Activated naive CD4-positive, alpha-beta T cell treated with anti-CD3 and anti-CD28 coated beads for 36 hours (primary cell): ENCODE measurements at regions of chr6 and their contacts with region 1.

Region 1: DNA sequence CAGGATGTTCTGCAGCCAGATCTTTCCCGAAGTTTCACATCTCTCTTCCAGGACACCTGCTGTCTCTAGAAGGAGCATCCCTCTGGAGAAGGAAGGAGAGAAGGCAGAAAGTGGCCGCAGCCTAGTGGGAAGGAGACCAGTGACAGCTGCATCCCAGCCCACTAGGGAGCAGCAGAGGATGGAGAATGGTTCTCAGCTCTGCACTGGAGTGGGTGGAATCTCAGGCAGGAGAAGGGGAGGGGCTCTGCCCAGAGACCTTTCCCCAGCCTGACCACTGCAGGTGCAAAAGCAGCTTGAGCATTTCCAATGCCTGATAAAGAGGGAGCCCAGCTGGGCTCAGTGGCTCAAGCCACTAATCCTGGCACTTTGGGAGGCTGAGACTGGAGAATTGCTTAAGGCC is 32.3 kb downstream of the NCR2 start:
- DNase-seq: peak; percentile 54
- H3K4me3 Mint-ChIP-seq: no peak overlapping the region
- H3K27ac Mint-ChIP-seq: no peak overlapping the region
- H3K4me1 Mint-ChIP-seq: peaks cover 16% of the 10 kb centered on the region
- H3K27me3 Mint-ChIP-seq: peaks cover 29% of the 10 kb centered on the region

Region 2: DNA sequence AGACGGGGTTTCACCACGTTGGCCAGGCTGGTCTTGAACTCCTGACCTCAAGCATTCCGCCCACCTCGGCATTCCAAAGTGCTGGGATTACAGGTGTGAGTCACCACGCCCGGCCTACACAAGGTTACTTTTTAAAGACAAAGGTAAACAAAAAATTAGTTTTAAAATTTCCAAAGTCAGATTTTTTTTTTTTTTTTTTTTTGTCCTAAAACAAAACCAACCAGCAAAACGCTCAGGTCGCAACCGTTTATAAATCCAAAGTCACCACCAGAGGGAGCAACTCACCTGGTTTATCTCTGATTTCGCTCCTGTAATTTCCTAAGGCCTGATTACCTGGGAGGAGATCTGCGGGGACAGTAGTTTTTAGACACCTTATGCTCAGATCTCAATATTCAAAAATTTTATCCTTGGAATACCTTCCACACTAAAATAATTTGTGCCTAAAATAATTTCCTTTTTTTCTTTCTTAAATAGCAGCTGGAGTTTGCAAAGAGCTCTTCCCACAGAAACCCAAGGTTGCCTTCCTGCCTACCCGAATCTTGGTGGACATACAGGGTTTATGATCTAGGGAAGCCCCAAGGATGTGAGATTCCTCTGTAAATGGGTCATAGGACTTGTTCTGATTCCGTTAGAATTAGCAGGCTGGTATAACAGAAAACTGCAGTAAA is 61.4 kb before region 1 on chr6:
- CTCF ChIA-PET with region 1: interaction called, 11 read pairs
- intact Hi-C with region 1: loop called (anchors 2 kb)
- DNase-seq: peak; percentile 73
- H3K4me3 Mint-ChIP-seq: no peak overlapping the region
- H3K27ac Mint-ChIP-seq: no peak overlapping the region
- H3K4me1 Mint-ChIP-seq: peaks cover 18% of the 10 kb centered on the region
- H3K27me3 Mint-ChIP-seq: no peaks in the 10 kb centered on the region

Region 3: DNA sequence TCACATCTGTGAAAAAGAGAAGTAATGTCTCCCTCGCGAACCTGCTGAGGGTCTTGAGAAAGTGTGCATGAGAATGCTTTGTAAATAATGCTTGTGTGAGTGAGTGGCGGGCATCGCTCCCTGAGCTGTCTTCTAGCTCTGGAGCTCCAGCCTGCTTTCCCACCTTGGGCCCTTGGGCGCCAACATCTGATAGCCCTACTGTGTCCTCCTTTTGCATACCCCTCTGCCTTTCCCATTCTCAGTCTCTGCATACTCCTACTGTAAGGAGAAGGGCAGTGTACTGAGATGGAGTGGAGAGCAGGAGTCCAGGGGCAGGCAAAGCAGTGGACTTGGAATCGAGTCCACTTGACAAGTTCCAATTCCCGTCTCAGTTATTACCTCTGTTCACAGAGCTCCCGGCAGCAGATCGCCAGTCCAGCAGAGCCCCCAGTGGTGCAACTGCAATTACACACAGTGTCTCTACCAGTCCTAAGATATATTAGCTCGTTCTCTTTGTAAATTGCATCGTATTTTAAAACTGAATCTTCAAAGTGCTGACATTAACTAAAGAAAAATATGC is 33.1 kb before region 1 on chr6:
- CTCF ChIA-PET with region 1: interaction called, 24 read pairs
- intact Hi-C with region 1: loop called (anchors 1 kb)
- DNase-seq: peak; percentile 30
- H3K4me3 Mint-ChIP-seq: no peak overlapping the region
- H3K27ac Mint-ChIP-seq: peak overlapping the region; percentile 78
- H3K4me1 Mint-ChIP-seq: peaks cover 46% of the 10 kb centered on the region
- H3K27me3 Mint-ChIP-seq: no peaks in the 10 kb centered on the region

Region 4: DNA sequence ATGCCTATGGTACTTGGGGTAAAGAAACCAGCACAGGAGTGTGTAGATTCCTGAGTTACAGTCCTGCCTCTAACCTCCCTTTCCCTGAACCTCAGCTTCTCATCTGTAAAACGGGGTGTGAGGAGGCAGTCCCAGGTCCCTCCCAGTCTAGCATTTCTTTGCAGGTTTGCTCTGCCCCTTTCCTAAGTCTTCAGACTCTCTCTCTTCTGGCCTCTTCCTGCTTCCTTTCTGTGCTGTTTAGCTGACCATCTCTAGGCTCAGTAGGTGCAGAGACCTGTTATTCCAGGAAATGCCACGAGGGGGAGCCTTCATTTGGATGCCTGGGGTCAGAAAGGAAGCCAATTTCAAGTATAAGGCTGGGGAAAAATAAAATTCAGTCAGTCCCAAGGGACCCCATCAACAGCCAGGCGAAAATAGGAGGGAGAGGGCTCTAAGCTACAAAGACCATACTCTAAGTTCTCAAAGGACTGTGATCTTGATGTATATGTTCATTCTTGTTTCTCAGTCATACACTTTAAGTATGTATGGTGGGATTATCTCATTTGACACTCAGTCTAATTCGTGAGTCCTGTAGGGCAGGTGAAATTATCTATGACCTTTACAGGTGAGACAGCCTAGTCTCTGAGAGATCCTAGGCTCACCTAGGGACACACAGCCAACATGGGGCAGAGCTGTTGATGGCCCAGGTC is 56.8 kb after region 1 on chr6:
- CTCF ChIA-PET with region 1: interaction called, 25 read pairs
- intact Hi-C with region 1: loop called (anchors 1 kb)
- DNase-seq: peak; percentile 92
- H3K4me3 Mint-ChIP-seq: no peak overlapping the region
- H3K27ac Mint-ChIP-seq: no peak overlapping the region
- H3K4me1 Mint-ChIP-seq: peaks cover 8% of the 10 kb centered on the region
- H3K27me3 Mint-ChIP-seq: peaks cover 11% of the 10 kb centered on the region

Region 5: DNA sequence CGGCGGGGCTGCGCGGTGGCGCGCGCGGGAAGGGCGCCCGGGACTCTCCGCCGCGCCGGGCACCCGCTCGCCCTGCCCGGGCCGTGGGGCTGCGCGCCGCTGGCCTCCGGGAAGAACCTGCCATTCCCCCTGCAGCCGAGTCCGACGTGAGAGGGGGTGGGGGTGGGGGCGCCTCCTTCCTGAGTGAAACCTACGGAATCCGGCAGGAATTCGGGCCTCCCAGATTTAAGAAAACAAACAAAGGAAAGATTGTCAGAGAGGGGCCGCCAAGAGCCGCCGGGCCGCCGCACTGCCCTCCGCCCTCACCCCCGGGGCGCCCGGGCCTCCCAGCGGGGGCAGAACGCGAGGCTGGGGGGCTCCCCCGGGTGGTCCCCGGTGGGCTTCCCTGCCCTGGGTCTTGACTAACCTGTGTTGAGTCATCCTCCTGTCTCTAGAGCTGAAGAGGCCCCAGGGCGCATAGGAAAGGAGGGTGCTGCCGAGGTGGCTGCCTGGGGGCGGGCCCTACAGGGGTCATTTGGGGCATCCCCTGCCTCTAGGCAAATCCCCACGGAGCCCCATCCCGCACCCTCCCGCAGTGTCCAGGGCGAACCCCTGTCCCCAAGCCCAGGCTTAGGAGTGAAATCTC is 136.3 kb after region 1 on chr6:
- CTCF ChIA-PET with region 1: no interaction called
- intact Hi-C with region 1: loop called (anchors 5 kb)
- DNase-seq: peak; percentile 69
- H3K4me3 Mint-ChIP-seq: peak overlapping the region; percentile 66
- H3K27ac Mint-ChIP-seq: no peak overlapping the region
- H3K4me1 Mint-ChIP-seq: peaks cover 16% of the 10 kb centered on the region
- H3K27me3 Mint-ChIP-seq: peaks cover 47% of the 10 kb centered on the region

Region 6: GRCh38 chr6:41683510-41684310 is 316.0 kb after region 1 on chr6:
- CTCF ChIA-PET with region 1: interaction called, 38 read pairs
- intact Hi-C with region 1: loop called (anchors 1 kb)
- DNase-seq: peak; percentile 84
- H3K4me3 Mint-ChIP-seq: peak overlapping the region; percentile 75
- H3K27ac Mint-ChIP-seq: peak overlapping the region; percentile 87
- H3K4me1 Mint-ChIP-seq: peaks cover 8% of the 10 kb centered on the region
- H3K27me3 Mint-ChIP-seq: no peaks in the 10 kb centered on the region